GM12878 (cell line): ENCODE measurements at regions of chr11 and their contacts with region 1.

Region 1: DNA sequence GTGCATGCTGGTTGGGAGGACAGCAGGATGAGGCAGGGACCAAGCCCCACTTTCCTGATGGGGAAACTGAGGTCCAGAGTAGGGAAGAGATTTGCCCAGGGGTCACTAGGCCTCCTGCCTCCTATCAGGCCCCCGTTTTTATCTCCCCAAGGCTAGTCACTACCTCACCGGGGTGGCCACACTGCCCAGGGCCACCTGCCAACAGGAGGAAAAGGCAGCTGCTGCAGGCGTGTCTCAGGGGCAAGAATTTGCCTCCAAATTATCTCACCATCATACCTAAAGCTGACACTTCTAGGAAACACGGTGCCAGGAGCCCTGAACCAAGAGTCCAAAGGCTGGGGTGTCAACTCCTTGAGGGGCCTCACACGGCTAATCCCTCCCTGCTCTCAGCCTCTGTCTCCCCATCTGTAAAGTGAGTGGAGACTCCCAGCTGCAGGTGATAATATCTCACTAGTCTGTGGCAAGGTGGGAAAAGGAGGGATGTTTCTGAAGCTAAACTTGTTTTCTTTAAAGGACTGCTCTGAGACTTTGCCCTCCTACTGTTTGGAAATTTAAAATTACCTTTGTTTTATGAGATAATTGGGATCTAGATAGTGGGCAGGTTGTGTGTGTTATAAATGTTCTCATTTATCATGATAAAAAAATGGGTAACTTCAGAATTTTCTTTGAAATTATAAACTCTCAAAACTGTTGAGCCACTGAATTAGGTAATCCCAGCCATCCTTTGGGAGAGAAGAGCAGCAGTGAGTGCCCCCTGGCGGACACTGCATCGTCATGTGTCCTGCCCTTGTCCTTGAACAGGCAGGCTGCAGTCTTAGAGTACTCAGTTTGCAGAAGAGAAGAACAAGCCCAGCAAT is 60.0 kb downstream of the MYO7A start:
- DNase-seq: peak; percentile 13
- ATAC-seq: peak; percentile 98
- H3K4me3 ChIP-seq: no peak overlapping the region
- H3K27ac ChIP-seq: no peak overlapping the region
- H3K4me1 ChIP-seq: no peaks in the 10 kb centered on the region
- H3K27me3 ChIP-seq: no peaks in the 10 kb centered on the region; a peak in 1 of 4 replicates
- CTCF ChIP-seq: peak; percentile 81 to 92 (median 86)
- EP300 ChIP-seq: no peak
- POLR2A ChIP-seq: no peak
- RAD21 ChIP-seq: peak; percentile 77

Region 2: GRCh38 chr11:77047007-77047927 is 140.7 kb before region 1 on chr11:
- CTCF ChIA-PET with region 1: interaction called, 3 read pairs
- POLR2A ChIA-PET with region 1: no interaction called
- RAD21 ChIA-PET with region 1: interaction called, 5 read pairs
- SMC1A ChIA-PET with region 1: no interaction called
- in situ Hi-C with region 1: no loop called
- intact Hi-C with region 1: loop called (anchors 5 kb)
- DNase-seq: peak; percentile 92
- ATAC-seq: peak; percentile 97
- H3K4me3 ChIP-seq: peak overlapping the region; percentile 15; the same call in 1 of the 2 replicates
- H3K27ac ChIP-seq: no peak overlapping the region
- H3K4me1 ChIP-seq: no peaks in the 10 kb centered on the region; the same call in 1 of the 2 replicates
- H3K27me3 ChIP-seq: no peaks in the 10 kb centered on the region; a peak in 1 of 4 replicates
- CTCF ChIP-seq: peak; percentile 45 to 70 (median 59); a peak in 5 of 6 replicates
- EP300 ChIP-seq: no peak; a peak in 1 of 4 replicates
- POLR2A ChIP-seq: no peak
- RAD21 ChIP-seq: peak; percentile 58

Region 3: GRCh38 chr11:77127232-77127911 is 60.6 kb before region 1 on chr11:
- CTCF ChIA-PET with region 1: interaction called, 50 read pairs
- POLR2A ChIA-PET with region 1: no interaction called
- RAD21 ChIA-PET with region 1: interaction called, 8 read pairs
- SMC1A ChIA-PET with region 1: interaction called, 20 read pairs
- in situ Hi-C with region 1: no loop called
- intact Hi-C with region 1: loop called (anchors 1 kb)
- DNase-seq: no peak
- ATAC-seq: peak; percentile 88
- H3K4me3 ChIP-seq: no peak overlapping the region
- H3K27ac ChIP-seq: no peak overlapping the region
- H3K4me1 ChIP-seq: 0 out of 2 replicates have a peak, but pooled peaks cover 3% of the 10 kb centered on the region
- H3K27me3 ChIP-seq: peaks cover 0 to 3% of the 10 kb centered on the region in 2 experiments; a peak in 2 of 4 replicates
- CTCF ChIP-seq: peak; percentile 84 to 99 (median 98)
- EP300 ChIP-seq: no peak
- POLR2A ChIP-seq: no peak
- RAD21 ChIP-seq: peak; percentile 59

Region 4: GRCh38 chr11:77217156-77217555 is 29.2 kb after region 1 on chr11:
- CTCF ChIA-PET with region 1: no interaction called
- POLR2A ChIA-PET with region 1: no interaction called
- RAD21 ChIA-PET with region 1: no interaction called
- SMC1A ChIA-PET with region 1: no interaction called
- in situ Hi-C with region 1: no loop called
- intact Hi-C with region 1: no loop called
- DNase-seq: no peak
- ATAC-seq: no peak
- H3K4me3 ChIP-seq: no peak overlapping the region
- H3K27ac ChIP-seq: no peak overlapping the region
- H3K4me1 ChIP-seq: no peaks in the 10 kb centered on the region
- H3K27me3 ChIP-seq: no peaks in the 10 kb centered on the region
- CTCF ChIP-seq: no peak
- EP300 ChIP-seq: no peak
- POLR2A ChIP-seq: no peak
- RAD21 ChIP-seq: no peak